Dorsolateral prefrontal cortex (tissue), 120 donors: ENCODE measurements at regions of chr6 and their contacts with region 1.

Region 1: DNA sequence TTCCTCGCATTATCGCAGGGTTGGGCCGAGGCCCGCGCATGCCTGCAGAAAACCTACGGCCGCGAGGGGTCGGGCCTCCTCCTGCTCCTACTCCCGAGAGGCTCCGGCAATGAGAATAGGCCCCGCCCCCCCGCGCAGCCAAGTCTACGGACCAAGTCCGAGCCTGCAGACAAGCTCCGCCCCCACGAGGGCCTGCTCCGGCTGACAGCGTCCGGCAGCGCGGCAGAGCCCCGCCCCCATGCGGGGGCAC is 3.1 kb upstream of the GPSM3 start:
- DNase-seq: peak; percentile 100
- H3K4me3 ChIP-seq: peak overlapping the region; percentile 66 to 97 (median 87)
- H3K27ac ChIP-seq: peak overlapping the region; percentile 97 to 100 (median 100)
- H3K27me3 ChIP-seq: no peaks in the 10 kb centered on the region
- CTCF ChIP-seq: peak in 51 of 56 donors; percentile 5 to 77 (median 51)

Region 2: GRCh38 chr6:32092760-32093497 is 102.6 kb before region 1 on chr6:
- intact Hi-C with region 1: no loop called
- DNase-seq: peak in 5 of 10 donors; percentile 35 to 88 (median 57)
- H3K4me3 ChIP-seq: no peak overlapping the region
- H3K27ac ChIP-seq: peak overlapping the region in 49 of 59 donors; percentile 4 to 83 (median 58)
- H3K27me3 ChIP-seq: peaks cover 0 to 26% (median 13%) of the 10 kb centered on the region in 45 donors
- CTCF ChIP-seq: no peak

Region 3: DNA sequence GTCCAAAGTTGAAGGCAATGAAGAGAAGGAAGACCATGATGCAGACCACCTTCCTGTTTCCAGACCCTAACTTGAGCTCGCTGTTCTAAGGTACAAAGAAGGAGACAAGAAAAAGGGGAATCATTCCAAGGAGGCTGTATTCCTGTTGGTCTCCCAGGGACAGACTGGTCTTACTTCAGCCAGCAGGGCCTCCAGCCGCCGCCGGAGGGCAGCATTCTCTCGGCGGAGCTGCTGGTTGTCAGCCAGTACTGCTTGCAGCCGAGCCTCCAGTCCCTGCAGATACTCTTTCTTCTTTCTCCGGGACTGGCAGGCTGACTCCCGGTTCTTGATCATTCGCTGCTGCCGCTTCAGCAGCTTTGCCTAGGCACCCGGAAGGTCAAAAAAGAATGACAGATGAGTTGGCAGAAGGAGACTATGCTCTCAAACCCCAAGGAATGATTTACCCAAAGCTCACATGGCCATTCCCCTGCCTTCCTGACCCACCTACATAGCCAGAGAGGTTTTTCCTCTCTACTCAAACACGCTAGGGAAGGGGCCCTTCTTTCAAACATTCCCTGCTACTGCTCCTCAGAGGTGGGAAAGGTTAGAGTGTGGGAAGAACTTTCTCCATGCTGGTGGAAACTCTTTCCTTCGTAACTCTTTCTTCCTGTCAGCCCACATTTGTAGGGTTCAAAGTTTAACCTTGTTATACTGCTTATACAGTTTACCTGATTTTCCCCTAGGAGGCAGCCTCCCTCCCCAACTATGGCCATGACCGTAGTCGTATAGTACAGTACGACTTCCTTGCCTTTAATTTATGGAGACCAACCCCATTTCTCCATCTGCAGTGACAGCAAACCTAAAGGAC is 76.6 kb before region 1 on chr6:
- intact Hi-C with region 1: loop called (anchors 2 to 5 kb)
- DNase-seq: peak; percentile 84 to 95 (median 92)
- H3K4me3 ChIP-seq: peak overlapping the region in 14 of 59 donors; percentile 1 to 25 (median 4)
- H3K27ac ChIP-seq: peak overlapping the region in 54 of 59 donors; percentile 6 to 88 (median 68)
- H3K27me3 ChIP-seq: no peaks in the 10 kb centered on the region
- CTCF ChIP-seq: peak; percentile 75 to 99 (median 94)

Region 4: DNA sequence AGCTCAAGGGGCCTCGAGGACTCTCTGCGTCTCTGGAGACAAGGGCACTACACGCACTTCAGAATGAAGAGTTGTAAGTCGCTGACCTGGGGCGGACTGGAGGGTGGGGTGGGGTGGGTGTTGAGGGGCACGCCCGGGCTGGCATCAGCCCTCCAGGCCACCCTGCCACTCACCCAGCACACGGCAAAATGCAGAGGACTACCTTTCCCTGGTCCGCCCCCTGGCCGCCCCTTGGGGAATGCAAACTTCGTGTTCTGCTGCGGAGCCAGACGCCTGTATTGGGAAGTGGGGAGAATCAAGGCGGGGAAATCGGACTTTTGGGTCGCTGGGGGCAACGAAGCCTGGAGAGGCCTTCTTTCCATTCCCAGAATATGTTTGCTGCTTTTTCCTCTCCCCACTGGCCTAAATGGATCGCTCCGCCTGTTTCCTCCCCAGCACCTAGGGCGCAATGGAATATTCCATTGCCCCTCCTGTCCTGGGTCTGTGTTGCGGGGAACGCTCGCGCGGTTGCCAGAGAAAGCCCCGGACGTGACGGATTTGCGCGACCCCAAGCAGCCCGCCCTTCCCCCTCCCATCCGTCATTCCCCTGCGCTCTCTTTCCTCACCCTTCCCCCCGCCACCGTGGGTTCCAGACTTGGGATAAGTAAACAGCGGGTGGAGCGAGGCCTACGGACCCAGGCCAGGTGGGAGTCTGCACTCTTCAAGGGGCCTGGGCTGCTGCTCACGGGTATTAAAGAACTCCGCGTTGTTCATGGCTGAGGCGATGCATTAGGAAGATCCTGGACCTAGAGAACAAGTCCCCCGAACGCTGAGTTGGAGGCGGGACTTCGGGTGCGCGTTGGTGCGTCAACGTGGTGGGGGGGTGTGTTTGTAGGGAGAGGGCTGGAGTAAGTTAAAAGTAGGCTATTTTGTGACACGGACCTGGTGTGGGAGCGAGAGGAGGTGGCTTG is 41.7 kb before region 1 on chr6 and contains the start of gene PPT2:
- intact Hi-C with region 1: loop called (anchors 2 kb)
- DNase-seq: peak; percentile 83 to 94 (median 90)
- H3K4me3 ChIP-seq: peak within 1 kb of the TSS; percentile 55 to 97 (median 84)
- H3K27ac ChIP-seq: peak within 1 kb of the TSS; percentile 68 to 99 (median 96)
- H3K27me3 ChIP-seq: no peaks in the 10 kb centered on the region
- CTCF ChIP-seq: peak in 30 of 56 donors; percentile 4 to 45 (median 20)
- total RNA-seq, gene PPT2: 21.2 to 55.9 (median 31.2) TPM

Region 5: DNA sequence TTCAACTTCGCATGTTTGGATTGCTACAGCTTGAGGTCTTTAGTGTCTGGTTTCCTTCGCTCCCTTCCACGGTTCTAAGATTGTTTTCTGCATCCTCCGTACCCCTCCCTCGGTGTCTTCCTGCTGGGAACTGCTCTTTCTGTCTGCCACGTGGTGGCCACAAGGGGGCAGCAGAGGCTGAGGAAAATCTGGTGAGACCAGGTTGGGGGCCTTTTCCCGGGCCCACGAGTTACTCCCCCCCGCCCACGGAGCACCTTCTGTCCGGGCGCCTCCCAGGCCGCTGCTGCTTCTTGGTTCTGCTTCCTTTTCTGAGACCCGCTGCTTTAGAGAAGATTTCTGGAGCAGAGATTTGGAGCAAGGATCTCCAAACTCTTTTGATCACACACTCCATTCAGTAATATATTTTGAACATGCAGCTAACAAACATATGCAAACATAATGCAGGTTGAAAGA is 49.4 kb after region 1 on chr6:
- intact Hi-C with region 1: loop called (anchors 1 to 10 kb)
- DNase-seq: peak; percentile 65 to 88 (median 76)
- H3K4me3 ChIP-seq: peak overlapping the region in 36 of 59 donors; percentile 5 to 46 (median 30)
- H3K27ac ChIP-seq: peak overlapping the region in 11 of 59 donors; percentile 3 to 65 (median 30)
- H3K27me3 ChIP-seq: no peaks in the 10 kb centered on the region
- CTCF ChIP-seq: peak; percentile 79 to 98 (median 94)

Region 6: DNA sequence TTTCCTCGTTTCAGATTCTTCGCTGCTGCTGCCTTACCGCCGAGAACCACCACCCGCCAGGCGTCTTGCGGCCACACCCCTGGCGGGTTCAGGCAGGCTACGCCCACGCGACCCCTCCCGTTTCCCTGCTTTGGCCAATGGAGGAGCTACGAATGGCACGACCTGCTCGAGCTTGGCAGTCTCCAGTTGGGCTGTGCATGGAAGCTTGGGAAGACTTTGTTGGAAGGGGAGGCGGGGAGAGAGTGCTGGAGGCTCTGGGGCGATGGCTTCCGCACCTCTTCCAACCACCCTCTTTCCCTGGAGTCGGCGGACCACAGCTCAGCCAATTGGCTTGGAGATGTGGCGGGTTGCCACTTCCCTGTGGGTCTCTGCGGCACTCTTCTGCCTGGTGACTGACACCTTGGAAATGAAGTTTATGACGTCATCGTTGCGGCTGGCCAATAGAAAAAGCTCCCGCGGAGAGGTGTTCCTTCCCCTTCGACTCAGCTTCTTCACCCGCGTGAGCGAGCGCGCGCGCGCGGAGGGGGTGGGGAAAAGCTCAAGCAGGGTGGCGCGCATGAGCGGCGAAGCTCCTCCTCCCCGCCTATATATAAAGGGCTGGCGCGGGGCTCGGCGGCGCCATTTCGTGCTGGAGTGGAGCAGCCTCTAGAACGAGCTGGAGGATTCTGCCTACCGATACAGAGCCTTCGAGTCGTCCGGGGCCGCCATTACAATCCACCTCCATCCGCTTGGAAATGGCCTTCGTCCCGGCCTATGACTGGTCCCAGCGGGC is 776.2 kb after region 1 on chr6:
- intact Hi-C with region 1: loop called in 1 of 2 experiments (anchors 5 kb)
- DNase-seq: peak; percentile 98 to 100 (median 99)
- H3K4me3 ChIP-seq: peak overlapping the region; percentile 61 to 100 (median 95)
- H3K27ac ChIP-seq: peak overlapping the region; percentile 99 to 100 (median 100)
- H3K27me3 ChIP-seq: no peaks in the 10 kb centered on the region
- CTCF ChIP-seq: peak in 19 of 56 donors; percentile 3 to 41 (median 9)